WTC11 (cell line): ENCODE measurements at regions of chr2 and their contacts with region 1.

Region 1: DNA sequence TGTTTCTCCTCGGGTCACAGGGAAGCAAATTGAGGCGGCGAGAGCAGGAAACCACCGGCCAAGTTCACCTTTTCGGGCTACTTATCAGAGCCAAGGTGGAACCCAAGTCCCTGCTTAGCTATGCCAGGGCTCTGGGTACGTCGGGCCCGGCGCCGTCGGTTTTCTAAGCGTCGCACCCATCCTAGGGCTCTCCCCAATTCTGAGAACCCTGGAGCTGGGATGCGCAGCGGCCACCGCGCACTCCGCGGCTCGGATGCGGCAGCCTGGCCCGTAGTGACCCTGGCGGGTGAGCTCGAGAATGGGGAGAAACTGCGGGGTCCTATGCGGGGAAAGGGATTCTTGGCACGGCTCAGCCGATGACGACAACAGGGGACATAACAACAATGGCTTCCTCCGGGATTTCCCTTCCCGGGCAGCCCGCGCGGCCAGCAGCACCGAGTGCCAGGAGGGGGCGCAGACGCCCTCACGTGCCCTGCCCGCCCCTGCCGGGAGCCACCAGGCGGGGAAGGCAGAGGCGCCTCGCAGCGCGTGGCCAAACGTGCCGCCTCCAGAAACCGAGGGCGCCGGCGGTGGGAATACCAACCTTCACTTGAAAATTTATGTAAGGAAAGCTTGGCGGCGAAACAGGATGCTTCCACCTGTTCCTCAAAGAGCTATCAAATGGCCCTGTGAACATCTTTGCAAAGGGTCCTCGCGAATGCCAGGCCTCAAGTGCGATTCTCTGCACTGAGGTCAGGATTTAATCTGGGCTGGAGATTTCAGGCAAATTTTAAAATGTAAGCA is 2.1 kb upstream of the SLC30A3 start:
- DNase-seq: peak; percentile 86
- ATAC-seq: peak; percentile 57
- H3K4me3 Mint-ChIP-seq: peak overlapping the region; percentile 93
- H3K27ac Mint-ChIP-seq: no peak overlapping the region
- H3K4me1 Mint-ChIP-seq: peaks cover 26% of the 10 kb centered on the region
- H3K27me3 Mint-ChIP-seq: peaks cover 27% of the 10 kb centered on the region
- CTCF ChIP-seq: peak; percentile 46; the same call in 1 of the 2 replicates

Region 2: GRCh38 chr2:27016801-27017325 is 248.1 kb before region 1 on chr2:
- CTCF ChIA-PET with region 1: no interaction called
- POLR2A ChIA-PET with region 1: no interaction called
- DNase-seq: peak; percentile 83
- ATAC-seq: peak; percentile 92
- H3K4me3 Mint-ChIP-seq: no peak overlapping the region
- H3K27ac Mint-ChIP-seq: no peak overlapping the region
- H3K4me1 Mint-ChIP-seq: peaks cover 12% of the 10 kb centered on the region
- H3K27me3 Mint-ChIP-seq: peaks cover 11% of the 10 kb centered on the region; the same call in 1 of the 2 replicates
- CTCF ChIP-seq: peak; percentile 71

Region 3: GRCh38 chr2:27249891-27250651 is 14.9 kb before region 1 on chr2:
- CTCF ChIA-PET with region 1: interaction called, 33 read pairs
- POLR2A ChIA-PET with region 1: interaction called, 11 read pairs
- DNase-seq: peak; percentile 89
- ATAC-seq: peak; percentile 86
- H3K4me3 Mint-ChIP-seq: peak overlapping the region; percentile 63
- H3K27ac Mint-ChIP-seq: no peak overlapping the region
- H3K4me1 Mint-ChIP-seq: peaks cover 18% of the 10 kb centered on the region
- H3K27me3 Mint-ChIP-seq: peaks cover 7% of the 10 kb centered on the region
- CTCF ChIP-seq: peak; percentile 56; the same call in 1 of the 2 replicates

Region 4: GRCh38 chr2:27509326-27509725 is 244.4 kb after region 1 on chr2:
- CTCF ChIA-PET with region 1: no interaction called
- POLR2A ChIA-PET with region 1: no interaction called
- DNase-seq: no peak
- ATAC-seq: peak; percentile 53
- H3K4me3 Mint-ChIP-seq: no peak overlapping the region
- H3K27ac Mint-ChIP-seq: no peak overlapping the region
- H3K4me1 Mint-ChIP-seq: no peaks in the 10 kb centered on the region; the same call in 1 of the 2 replicates
- H3K27me3 Mint-ChIP-seq: 0 out of 2 replicates have a peak, but pooled peaks cover 4% of the 10 kb centered on the region
- CTCF ChIP-seq: no peak